ENCODE measurements at regions of chr16 and their contacts with region 1.

Region 1: DNA sequence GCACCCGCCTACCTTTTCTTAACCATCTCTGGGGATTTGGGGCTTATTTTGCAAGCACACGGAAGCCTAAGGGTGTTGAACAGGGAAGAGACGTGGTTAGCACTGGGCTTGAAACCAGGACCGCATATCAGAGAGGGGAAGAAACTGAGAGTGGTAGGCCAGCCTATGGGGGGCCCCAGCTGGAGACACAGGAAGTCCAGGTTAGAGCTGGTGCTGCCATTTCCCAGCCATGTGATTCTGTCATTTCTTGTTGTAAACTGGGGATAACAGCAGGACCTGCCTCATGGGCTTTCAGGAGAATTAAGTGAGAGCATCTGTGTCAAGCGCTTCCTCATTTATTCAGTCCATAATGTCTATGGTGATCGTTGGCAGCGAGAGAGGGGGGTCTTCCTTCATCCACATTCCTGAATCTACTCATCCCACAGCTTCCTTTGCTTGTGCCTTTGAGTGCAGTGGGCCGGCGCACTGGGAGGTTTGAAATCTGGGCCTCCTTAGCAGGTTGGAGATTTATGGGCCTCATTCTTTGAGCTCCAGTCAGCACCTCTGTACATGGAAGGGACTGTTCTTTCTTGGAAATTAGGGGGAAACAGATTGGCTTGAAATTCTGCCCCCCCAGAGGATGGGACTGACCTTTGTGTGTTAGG is 20.1 kb downstream of the NKD1 start:
- DNase-seq: no peak
- H3K4me3 ChIP-seq: no peak overlapping the region
- H3K27ac ChIP-seq: no peak overlapping the region
- H3K4me1 ChIP-seq: no peaks in the 10 kb centered on the region
- H3K27me3 ChIP-seq: no peaks in the 10 kb centered on the region
- CTCF ChIP-seq: no peak

Region 2: DNA sequence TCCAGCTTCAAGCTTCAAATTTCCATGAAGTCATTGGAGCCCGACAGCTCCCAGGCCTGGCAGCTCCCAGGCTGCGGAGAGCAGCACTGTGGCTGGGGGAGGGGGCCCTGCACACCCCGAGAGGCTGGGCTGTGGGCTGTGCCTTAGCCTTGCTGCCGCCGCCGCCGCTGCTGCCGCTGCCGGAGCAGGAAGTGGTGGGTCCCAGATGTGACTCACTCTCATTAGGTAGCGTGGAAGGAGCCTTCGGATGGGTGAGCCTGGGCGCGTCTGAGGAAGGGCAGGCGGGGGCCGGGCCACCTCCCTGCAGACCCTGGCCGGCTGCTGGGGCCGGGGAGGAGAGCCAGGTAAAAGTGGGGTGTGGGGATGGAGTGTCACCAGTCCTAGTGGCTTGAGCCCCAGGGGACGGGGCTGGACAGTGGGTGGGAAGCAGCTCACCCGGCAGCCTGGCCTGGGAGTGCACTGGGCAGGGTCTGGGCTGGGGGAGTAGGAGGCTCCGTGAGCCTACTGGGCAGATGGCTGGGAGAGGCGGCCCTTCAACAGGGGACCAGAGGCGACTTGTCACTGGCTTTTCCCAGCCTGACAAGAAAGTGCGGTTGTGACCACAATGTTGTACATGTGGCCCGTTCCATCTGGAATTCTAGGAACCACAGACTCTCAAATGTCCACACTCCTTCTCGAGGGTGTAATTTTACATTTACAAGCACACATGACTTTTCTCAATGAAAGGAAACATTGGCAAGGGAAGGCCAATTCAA is 301.8 kb before region 1 on chr16 and contains the start of gene ADCY7:
- CTCF ChIA-PET with region 1: no interaction called
- dilution Hi-C with region 1: loop called (anchors 10 kb)
- in situ Hi-C with region 1: no loop called
- intact Hi-C with region 1: no loop called
- DNase-seq: peak; percentile 22
- H3K4me3 ChIP-seq: no peak within 1 kb of the TSS
- H3K27ac ChIP-seq: no peak within 1 kb of the TSS
- H3K4me1 ChIP-seq: no peaks in the 10 kb centered on the region
- H3K27me3 ChIP-seq: no peaks in the 10 kb centered on the region
- CTCF ChIP-seq: no peak
- total RNA-seq, gene ADCY7: 8.2 to 16.3 TPM

Region 3: GRCh38 chr16:50781043-50781442 is 212.7 kb after region 1 on chr16:
- CTCF ChIA-PET with region 1: no interaction called
- dilution Hi-C with region 1: no loop called
- in situ Hi-C with region 1: no loop called
- intact Hi-C with region 1: no loop called
- DNase-seq: no peak
- H3K4me3 ChIP-seq: no peak overlapping the region
- H3K27ac ChIP-seq: no peak overlapping the region
- H3K4me1 ChIP-seq: no peaks in the 10 kb centered on the region
- H3K27me3 ChIP-seq: no peaks in the 10 kb centered on the region
- CTCF ChIP-seq: peak; percentile 11 to 21